Panc1 (cell line): ENCODE measurements at regions of chr14 and their contacts with region 1.

Region 1: GRCh38 chr14:37594238-37594914 is 673 bp downstream of the FOXA1 start:
- DNase-seq: peak; percentile 32
- ATAC-seq: peak; percentile 82
- H3K4me3 ChIP-seq: peak overlapping the region; percentile 45 to 62
- H3K27ac ChIP-seq: peak overlapping the region; percentile 65; the same call in 1 of the 2 replicates
- H3K4me1 ChIP-seq: no peaks in the 10 kb centered on the region; the same call in 1 of the 2 replicates
- H3K27me3 ChIP-seq: no peaks in the 10 kb centered on the region; the same call in 1 of the 2 replicates
- CTCF ChIP-seq: peak; percentile 85

Region 2: DNA sequence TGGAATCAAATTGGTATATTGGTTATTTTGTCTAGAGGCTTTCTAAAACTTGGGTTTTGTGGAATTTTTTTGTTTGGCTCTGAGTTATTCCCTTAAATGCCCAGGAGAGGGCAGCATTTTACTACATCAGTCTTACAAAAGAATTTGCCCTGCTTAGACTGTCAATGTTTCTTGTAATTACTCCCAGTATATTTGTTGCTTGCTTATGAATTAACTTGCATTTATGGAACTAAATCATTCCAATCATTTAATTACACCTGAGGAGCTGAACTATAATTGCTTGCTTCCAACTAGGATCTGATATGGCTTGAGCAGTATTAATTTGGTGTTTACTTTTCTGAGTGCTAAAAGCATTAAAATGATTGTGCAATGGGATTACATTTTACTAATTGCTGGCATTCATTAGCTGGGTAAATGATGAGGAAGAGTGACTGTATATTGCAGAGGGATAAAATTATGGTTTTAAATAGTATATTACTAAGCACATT is 347.9 kb before region 1 on chr14:
- CTCF ChIA-PET with region 1: no interaction called
- POLR2A ChIA-PET with region 1: no interaction called
- in situ Hi-C with region 1: no loop called
- intact Hi-C with region 1: loop called (anchors 5 kb)
- DNase-seq: no peak
- ATAC-seq: no peak
- H3K4me3 ChIP-seq: no peak overlapping the region
- H3K27ac ChIP-seq: no peak overlapping the region
- H3K4me1 ChIP-seq: no peaks in the 10 kb centered on the region
- H3K27me3 ChIP-seq: no peaks in the 10 kb centered on the region
- CTCF ChIP-seq: peak; percentile 68; the same call in 1 of the 2 replicates